Ovary (tissue), 10 donors: ENCODE measurements at regions of chr5 and their contacts with region 1.

Region 1: DNA sequence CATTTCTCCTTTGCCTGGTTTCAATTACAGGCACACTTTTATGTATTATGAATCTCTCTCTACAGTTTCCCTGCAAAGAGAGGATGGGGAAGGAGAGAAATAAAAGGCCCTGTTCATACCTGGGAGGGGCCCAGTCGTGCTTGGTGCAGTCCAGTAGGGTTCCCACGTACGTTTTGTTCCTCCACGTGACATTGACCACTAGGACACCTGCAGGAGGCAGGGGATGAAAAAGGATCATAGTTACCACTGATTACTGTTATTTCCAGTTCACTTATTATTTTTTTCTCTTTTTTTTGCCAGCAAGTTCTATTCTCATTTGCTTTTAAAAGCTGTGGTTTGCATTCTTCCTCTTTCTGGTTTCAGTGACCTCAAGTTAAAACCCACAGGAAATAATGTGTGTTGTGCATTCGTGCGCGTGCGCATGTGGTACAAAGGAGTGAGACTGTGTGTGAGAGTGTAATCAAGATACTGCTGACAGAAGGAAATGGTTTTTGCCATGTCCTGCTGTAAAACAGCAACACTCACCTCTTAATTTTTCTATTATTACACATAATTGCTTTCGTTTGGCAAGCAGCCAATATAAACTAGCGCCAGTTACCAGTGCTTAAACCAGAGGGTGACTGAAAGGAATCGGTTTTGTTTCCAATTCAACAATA is 96.8 kb downstream of the ZNF608 start:
- DNase-seq: peak in 4 of 5 donors; percentile 31 to 59 (median 44)
- H3K4me3 ChIP-seq: no peak overlapping the region
- H3K27ac ChIP-seq: no peak overlapping the region
- H3K4me1 ChIP-seq: peaks cover 3% of the 10 kb centered on the region
- H3K27me3 ChIP-seq: no peaks in the 10 kb centered on the region
- CTCF ChIP-seq: no peak
- EP300 ChIP-seq: no peak
- POLR2A ChIP-seq: no peak

Region 2: GRCh38 chr5:124748687-124749594 is 99.3 kb after region 1 on chr5:
- intact Hi-C with region 1: loop called in 1 of 4 experiments (anchors 10 kb)
- DNase-seq: peak; percentile 64 to 80 (median 72)
- H3K4me3 ChIP-seq: peak overlapping the region; percentile 69
- H3K27ac ChIP-seq: peak overlapping the region in 1 of 2 donors; percentile 87
- H3K4me1 ChIP-seq: peaks cover 2% of the 10 kb centered on the region
- H3K27me3 ChIP-seq: no peaks in the 10 kb centered on the region
- CTCF ChIP-seq: no peak
- EP300 ChIP-seq: no peak
- POLR2A ChIP-seq: no peak